Dorsolateral prefrontal cortex (tissue), 120 donors: ENCODE measurements at regions of chr4 and their contacts with region 1.

Region 1: DNA sequence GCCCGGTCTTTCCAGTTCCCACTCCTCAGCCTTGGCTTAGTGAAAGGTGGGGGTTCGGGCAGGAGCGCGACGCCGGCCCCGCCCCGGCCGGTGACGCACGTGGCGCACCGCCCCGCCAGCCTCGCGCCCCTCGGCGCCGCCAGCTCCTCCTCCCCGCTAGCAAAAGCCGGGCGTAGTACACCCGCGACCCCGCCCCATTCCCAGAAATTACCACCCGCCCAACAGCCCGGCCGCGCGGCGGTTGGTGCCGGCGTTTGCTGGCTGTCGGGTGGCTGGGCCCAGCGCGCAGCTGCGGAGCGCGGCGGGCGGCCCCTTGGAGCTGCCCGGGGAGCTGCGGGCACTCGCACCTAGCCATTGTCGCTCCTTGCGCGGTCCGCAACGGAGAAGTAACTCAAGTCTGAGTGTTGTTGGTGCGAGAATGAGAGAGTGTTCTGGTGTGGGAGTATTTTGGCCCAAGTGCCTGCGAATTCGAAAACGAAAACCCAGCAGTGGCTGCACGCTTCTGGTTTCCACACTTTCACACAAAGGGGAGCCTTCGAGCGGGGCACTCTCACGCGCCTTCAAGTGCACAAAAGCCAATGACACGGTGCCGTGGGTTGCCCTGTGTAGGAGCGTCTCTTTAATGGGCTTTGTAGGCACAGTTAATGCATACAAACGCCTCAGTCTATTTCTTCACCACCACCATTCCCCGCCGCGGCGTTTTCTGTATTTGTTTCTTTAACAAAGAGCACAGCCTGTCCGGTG is 1.0 kb upstream of the ELF2 start:
- DNase-seq: peak; percentile 84 to 96 (median 90)
- H3K4me3 ChIP-seq: peak overlapping the region; percentile 55 to 99 (median 94)
- H3K27ac ChIP-seq: peak overlapping the region; percentile 90 to 100 (median 100)
- H3K27me3 ChIP-seq: no peaks in the 10 kb centered on the region
- CTCF ChIP-seq: peak in 29 of 56 donors; percentile 7 to 55 (median 23)

Region 2: GRCh38 chr4:138999666-139000065 is 178.4 kb before region 1 on chr4:
- intact Hi-C with region 1: no loop called
- DNase-seq: no peak
- H3K4me3 ChIP-seq: no peak overlapping the region
- H3K27ac ChIP-seq: no peak overlapping the region
- H3K27me3 ChIP-seq: no peaks in the 10 kb centered on the region
- CTCF ChIP-seq: no peak

Region 3: DNA sequence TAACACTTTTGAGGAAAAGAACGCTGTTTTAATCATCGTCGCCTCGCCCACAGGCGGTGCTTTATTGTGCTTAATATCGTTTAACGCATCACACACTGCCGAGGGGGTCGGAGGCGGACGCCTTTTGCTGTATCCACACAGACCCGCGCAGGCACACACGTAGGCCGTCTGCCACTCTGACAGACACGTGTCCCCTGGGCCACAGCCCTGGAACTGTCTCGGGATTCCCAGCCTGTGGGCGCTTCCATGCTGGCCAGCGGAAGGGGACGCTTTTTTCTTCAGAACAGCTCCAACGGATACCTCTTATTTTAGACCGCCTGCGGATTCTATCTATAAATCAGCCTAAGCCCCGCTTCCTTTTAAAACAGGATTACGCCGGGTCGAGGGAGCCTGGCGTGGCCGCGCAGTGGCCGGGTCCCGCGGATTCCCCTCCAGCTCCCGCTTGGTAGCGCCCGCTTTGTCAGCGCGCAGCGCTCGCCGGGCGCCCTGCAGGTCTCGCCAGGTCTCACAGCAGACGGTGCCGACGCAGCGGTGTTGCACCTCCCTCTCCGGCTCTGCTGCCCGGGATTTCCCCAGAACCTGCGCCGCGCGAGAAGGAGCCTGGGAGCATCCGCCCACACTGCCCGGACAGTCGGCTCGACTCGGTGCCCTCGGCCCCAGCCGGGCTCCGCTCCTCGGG is 162.6 kb before region 1 on chr4 and contains the start of gene NOCT:
- intact Hi-C with region 1: loop called (anchors 5 kb)
- DNase-seq: peak; percentile 73 to 89 (median 87)
- H3K4me3 ChIP-seq: peak within 1 kb of the TSS; percentile 50 to 93 (median 78)
- H3K27ac ChIP-seq: peak within 1 kb of the TSS in 58 of 59 donors; percentile 61 to 97 (median 88)
- H3K27me3 ChIP-seq: no peaks in the 10 kb centered on the region
- CTCF ChIP-seq: peak in 24 of 56 donors; percentile 2 to 53 (median 26)
- total RNA-seq, gene NOCT: 6.5 to 26.5 (median 12.5) TPM

Region 4: GRCh38 chr4:139050446-139050845 is 127.6 kb before region 1 on chr4:
- intact Hi-C with region 1: no loop called
- DNase-seq: no peak
- H3K4me3 ChIP-seq: no peak overlapping the region
- H3K27ac ChIP-seq: peak overlapping the region in 8 of 59 donors; percentile 2 to 52 (median 18)
- H3K27me3 ChIP-seq: no peaks in the 10 kb centered on the region
- CTCF ChIP-seq: no peak

Region 5: GRCh38 chr4:139083956-139084803 is 93.9 kb before region 1 on chr4:
- intact Hi-C with region 1: loop called (anchors 1 to 2 kb)
- DNase-seq: peak; percentile 69 to 91 (median 86)
- H3K4me3 ChIP-seq: peak overlapping the region; percentile 57 to 91 (median 81)
- H3K27ac ChIP-seq: peak overlapping the region; percentile 84 to 98 (median 94)
- H3K27me3 ChIP-seq: no peaks in the 10 kb centered on the region
- CTCF ChIP-seq: peak in 36 of 56 donors; percentile 2 to 46 (median 32)

Region 6: DNA sequence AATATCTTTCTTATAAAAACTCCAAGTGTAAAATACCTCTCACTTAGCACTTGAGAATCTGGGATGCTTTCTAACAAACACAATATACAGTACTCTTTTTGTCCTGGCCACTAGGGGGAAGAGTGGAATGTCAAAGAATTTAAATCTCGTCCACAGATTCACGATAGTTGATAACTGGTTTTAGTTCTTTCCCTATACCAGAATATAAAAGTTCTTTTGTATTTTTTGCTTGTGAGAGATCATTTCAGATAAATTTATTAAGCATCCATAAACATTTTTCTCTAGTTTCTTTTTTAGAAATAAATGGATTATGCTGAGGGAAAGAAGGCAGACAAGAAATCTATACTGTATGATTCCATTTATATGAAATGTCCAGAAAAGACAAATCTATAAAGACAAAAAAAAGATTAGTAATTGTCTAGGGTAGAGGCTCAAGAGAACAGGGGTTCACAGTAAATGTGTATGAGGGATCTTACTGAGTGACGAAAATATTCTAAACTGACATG is 51.5 kb after region 1 on chr4:
- intact Hi-C with region 1: loop called in 1 of 2 experiments (anchors 10 kb)
- DNase-seq: no peak
- H3K4me3 ChIP-seq: peak overlapping the region in 3 of 59 donors; percentile 15 to 24 (median 17)
- H3K27ac ChIP-seq: no peak overlapping the region
- H3K27me3 ChIP-seq: no peaks in the 10 kb centered on the region
- CTCF ChIP-seq: peak; percentile 62 to 92 (median 75)

Region 7: DNA sequence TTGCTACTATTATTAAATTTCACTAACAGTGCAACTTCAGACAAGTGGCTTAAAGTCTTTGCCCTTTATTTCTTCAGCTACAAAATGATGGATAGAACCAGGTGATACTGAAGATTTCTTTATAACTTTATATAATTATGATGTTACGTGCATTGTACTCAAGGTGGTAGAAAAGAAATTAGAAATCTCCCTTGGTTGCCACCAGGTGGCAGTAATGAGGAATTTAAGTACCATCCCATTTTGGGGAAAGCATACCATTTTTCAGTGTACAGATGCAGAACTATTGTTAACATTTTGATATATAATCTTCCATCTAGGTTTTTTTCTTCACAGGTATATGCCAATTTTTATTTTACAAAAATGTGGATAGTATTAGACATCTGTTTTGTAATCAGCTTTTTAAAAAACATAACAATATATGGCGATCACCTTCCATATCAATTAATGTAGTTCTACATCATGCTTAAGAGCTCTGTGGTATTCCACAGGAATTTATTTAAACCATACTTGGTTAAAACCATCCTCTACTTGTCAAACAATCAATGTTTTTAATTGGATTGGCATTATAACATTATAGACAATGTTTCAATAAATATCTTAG is 238.1 kb after region 1 on chr4:
- intact Hi-C with region 1: no loop called
- DNase-seq: peak in 1 of 10 donors; percentile 18
- H3K4me3 ChIP-seq: no peak overlapping the region
- H3K27ac ChIP-seq: no peak overlapping the region
- H3K27me3 ChIP-seq: no peaks in the 10 kb centered on the region
- CTCF ChIP-seq: peak; percentile 57 to 87 (median 76)

Region 8: DNA sequence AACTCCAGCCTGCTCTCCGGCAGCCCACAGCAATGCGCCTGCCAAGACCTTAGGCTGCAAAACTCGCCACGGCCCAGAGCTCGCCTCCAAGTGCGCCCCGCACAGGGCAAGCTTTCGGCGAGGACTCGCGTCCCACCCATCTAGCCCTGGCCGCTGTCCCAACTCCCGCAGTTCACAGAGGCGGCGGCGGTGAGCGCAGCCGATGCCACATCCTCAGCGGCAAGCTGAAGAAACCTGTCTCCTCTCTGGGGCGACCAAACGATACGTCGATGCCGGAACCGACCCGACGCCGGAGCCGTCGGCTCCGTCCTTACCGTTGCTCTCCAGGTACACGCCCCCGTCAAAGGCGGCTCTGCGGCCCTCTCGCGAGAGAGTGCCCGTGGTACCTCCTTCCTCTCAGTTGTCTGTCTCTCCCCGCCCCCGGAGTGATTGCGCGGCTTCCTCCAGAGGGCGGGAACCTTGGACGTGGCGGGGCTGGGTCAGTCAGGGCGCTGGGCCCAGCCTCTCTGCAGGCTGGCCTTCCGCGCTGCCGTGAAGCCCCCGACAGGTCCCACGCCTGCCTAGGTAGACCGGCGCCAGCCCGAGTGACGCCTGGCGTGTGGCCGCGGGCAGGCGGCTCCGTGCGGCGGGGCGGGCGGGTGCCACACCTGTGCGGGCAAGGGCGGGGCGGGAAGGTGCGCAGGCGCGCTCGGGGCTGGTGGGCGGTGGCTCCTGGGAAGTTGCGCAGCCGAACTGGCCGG is 275.5 kb after region 1 on chr4:
- intact Hi-C with region 1: loop called (anchors 5 kb)
- DNase-seq: peak; percentile 74 to 96 (median 92)
- H3K4me3 ChIP-seq: peak overlapping the region; percentile 62 to 97 (median 88)
- H3K27ac ChIP-seq: peak overlapping the region; percentile 69 to 99 (median 92)
- H3K27me3 ChIP-seq: no peaks in the 10 kb centered on the region
- CTCF ChIP-seq: peak in 24 of 56 donors; percentile 1 to 47 (median 16)

Region 9: DNA sequence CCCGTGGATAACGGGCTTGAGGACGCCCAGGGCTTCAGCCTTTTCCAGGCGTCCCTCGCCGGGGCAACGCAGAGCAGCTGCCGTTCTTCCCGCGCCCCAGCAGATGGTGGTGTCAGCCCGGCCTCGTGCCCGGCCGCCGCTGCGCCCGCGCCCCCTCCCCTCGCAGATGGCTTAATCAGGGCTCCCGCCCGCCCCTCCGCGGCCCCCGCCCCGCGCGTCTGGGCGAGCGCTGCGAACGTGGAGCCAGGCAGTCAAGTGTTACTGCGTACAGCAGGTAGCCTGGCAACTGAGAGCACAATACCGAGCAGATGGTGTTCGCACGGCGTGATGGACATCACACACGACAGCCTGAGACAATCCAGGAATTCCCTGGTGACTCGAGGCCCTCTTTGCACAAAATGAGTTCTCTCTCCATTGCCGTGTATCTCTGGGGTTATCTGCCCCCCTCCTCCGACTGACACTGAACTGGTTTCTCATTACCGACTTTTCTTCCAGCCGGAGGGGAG is 556.9 kb after region 1 on chr4:
- intact Hi-C with region 1: no loop called
- DNase-seq: peak; percentile 78 to 96 (median 88)
- H3K4me3 ChIP-seq: peak overlapping the region; percentile 44 to 81 (median 64)
- H3K27ac ChIP-seq: peak overlapping the region in 58 of 59 donors; percentile 13 to 92 (median 86)
- H3K27me3 ChIP-seq: no peaks in the 10 kb centered on the region
- CTCF ChIP-seq: peak; percentile 41 to 95 (median 87)